Adrenal gland (tissue), 19 donors: ENCODE measurements at regions of chr9 and their contacts with region 1.

Region 1: DNA sequence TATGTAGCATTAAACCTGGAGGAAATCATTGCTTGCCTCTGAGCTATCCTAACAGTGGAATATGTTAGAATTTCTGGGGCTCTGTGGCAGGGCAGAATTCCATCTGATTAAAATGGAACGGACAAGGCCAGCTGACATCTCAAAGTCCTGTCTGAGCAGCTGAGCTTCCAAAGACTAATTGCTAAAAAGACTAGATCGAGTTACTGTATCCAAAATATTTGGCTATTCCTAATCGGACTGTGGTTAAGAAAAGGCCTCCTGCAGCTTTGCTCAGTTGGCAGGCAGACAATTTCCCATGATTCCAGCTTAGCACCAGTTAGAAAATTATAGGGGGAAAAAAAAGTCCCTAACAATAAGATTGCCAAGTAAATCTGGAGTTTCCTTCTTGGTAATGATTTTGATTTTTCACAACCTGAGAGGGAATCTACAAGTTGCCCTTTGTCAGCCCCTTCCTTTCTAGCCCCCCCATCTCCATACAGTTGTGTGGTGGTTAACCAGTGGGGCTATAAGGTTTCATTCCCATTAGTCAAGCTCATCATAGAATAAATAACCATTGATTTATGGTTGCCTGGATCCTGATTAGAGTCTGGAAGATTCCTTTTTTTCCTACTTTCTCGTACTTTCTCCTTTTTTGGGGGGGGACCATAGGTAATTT is 26.4 kb downstream of the PTGR1 start:
- DNase-seq: peak in 6 of 7 donors; percentile 14 to 61 (median 41)
- H3K4me3 ChIP-seq: no peak overlapping the region
- H3K27ac ChIP-seq: no peak overlapping the region
- H3K4me1 ChIP-seq: no peaks in the 10 kb centered on the region
- H3K27me3 ChIP-seq: no peaks in the 10 kb centered on the region
- CTCF ChIP-seq: no peak
- POLR2A ChIP-seq: no peak

Region 2: DNA sequence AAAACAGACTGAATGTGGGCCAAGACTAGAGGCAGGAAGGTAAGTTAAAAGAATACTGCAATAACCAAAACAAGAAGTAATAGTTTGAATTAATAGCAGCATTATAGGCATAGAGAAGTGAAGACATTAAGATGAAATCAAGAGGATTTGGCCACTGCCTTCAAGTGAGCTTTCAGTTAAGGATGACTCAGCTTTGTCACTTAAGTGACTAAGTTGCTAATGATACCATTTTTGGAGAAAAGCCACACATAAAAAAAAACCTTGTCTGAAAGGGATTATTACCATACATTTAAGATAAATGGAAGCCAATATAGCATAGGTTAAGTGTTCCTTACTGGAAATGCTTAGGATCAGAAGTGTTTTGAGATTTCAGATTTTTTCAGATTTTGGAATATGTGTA is 145.9 kb before region 1 on chr9:
- intact Hi-C with region 1: loop called in 1 of 2 experiments (anchors 10 kb)
- DNase-seq: peak in 1 of 7 donors; percentile 12
- H3K4me3 ChIP-seq: no peak overlapping the region
- H3K27ac ChIP-seq: no peak overlapping the region
- H3K4me1 ChIP-seq: peaks cover 0 to 24% of the 10 kb centered on the region in 2 donors
- H3K27me3 ChIP-seq: no peaks in the 10 kb centered on the region
- CTCF ChIP-seq: no peak
- POLR2A ChIP-seq: no peak